Mammary epithelial cell (primary cell): ENCODE measurements at regions of chr1 and their contacts with region 1.

Region 1: DNA sequence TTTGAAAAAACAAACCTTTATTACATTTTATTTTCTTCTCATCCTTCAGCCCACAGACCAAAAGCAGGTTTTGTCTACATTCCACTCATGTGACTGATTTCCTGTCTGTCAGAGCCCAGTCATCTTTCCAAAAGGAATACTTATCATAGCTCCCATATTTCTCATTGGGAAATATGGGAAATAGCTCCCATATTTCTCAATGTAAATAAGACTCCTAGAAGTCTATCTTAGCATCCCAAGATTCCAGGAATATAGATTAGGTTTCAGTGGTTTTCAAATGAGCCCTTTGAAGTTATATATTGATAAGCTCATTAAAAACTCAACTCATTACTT is 19.1 kb upstream of the NRDC start:
- DNase-seq: peak; percentile 81
- H3K4me3 ChIP-seq: no peak overlapping the region
- H3K27ac ChIP-seq: peak overlapping the region; percentile 71
- H3K4me1 ChIP-seq: peaks cover 27% of the 10 kb centered on the region
- H3K27me3 ChIP-seq: no peaks in the 10 kb centered on the region
- CTCF ChIP-seq: no peak

Region 2: DNA sequence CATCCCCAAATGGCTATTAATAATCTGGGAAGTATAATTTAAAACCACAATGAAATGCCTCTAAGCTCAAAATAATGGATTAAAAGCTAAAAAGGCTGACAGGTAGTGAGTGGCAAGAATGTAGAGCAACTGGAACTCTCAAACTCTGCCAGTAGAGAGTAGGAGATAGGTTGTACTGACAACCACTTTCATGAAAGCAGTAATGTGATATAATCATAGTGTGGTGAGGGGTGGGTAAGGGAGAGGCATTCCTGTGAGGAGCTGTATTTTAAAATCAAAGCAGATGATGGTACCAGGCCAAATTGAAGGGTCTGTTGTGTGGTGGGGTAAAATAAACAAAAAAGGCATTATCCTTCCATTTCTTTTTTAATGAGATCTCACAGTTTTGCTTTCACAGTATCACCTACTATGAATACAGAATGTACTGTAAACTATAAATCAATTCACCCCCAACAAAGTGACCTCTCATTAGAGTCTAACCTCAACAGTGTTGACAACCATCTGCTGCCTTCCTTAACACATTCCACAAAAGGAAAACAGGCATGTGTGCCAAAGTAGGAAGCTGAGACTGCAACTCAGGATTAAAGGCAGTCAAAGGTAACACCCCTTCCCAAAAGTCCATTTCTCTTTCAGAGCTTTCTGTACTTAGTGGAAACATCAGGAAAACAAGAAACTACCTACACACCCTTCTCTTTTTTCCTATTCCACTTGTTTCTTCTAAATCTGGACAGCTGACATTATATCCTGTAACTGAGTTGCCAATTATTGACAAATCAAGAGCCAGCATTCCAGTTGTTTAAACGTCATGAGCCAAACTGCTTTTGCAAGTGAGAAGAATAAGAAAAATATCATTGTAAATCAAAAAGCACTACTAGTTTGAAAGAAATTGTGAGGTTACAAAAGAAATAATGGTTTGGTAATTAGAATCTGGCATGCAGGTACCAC is 1068.4 kb before region 1 on chr1:
- CTCF ChIA-PET with region 1: no interaction called
- dilution Hi-C with region 1: no loop called
- in situ Hi-C with region 1: no loop called
- intact Hi-C with region 1: no loop called
- DNase-seq: no peak
- H3K4me3 ChIP-seq: no peak overlapping the region
- H3K27ac ChIP-seq: no peak overlapping the region
- H3K4me1 ChIP-seq: no peaks in the 10 kb centered on the region
- H3K27me3 ChIP-seq: no peaks in the 10 kb centered on the region
- CTCF ChIP-seq: no peak

Region 3: DNA sequence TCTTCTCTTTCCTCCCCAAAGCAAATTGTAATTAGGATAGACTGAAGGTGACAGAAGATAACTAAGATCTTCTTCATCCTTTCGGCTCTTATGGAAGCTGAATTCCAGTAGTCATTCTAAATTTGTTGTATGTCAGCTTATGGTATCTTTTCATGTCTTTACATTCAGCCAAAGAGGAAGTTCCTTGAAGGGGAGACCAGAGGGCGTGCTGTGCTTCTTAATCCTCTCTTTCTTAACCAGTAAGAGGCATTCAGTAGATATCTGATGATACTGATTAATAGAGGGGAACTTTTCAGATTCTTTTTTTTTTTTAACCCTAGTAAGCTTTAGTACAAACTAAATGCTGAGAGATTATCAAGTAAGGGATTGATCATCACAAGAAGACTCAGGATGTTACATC is 178.5 kb before region 1 on chr1:
- CTCF ChIA-PET with region 1: no interaction called
- dilution Hi-C with region 1: no loop called
- in situ Hi-C with region 1: no loop called
- intact Hi-C with region 1: no loop called
- DNase-seq: no peak
- H3K4me3 ChIP-seq: no peak overlapping the region
- H3K27ac ChIP-seq: no peak overlapping the region
- H3K4me1 ChIP-seq: no peaks in the 10 kb centered on the region
- H3K27me3 ChIP-seq: no peaks in the 10 kb centered on the region
- CTCF ChIP-seq: no peak

Region 4: DNA sequence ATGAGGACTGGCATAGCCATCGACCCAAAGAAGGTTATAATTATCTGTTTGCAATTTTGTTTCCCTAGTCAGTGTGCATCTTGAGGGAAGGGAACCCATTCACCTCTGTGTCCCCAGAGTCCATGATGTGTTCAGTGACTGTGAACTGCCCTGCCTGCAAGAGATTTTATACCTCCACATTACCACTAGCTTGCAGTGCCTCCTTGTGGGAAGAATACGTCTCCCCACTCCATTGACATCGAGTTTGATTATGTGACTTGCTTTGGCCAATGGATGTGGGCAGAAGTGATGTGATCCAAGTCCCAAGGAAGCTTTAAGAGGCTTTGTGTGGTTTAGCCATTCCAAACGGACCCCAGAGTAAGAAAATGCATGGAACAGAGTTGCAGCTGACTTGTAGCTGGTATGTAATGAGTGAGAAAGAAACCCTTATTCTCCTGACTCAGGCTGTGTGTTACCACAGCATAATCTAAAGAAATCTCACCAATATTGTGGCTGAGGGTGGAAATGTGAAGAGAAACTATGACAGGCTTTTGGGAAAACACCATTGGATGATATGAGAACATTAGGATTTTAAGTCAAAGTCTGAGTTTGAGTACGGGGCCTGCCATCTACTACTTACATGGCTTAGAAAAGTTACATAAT is 28.6 kb after region 1 on chr1:
- CTCF ChIA-PET with region 1: interaction called, 10 read pairs
- dilution Hi-C with region 1: no loop called
- in situ Hi-C with region 1: no loop called
- intact Hi-C with region 1: loop called (anchors 1 kb)
- DNase-seq: peak; percentile 35
- H3K4me3 ChIP-seq: no peak overlapping the region
- H3K27ac ChIP-seq: no peak overlapping the region
- H3K4me1 ChIP-seq: peaks cover 8% of the 10 kb centered on the region
- H3K27me3 ChIP-seq: no peaks in the 10 kb centered on the region
- CTCF ChIP-seq: peak; percentile 49 to 54

Region 5: DNA sequence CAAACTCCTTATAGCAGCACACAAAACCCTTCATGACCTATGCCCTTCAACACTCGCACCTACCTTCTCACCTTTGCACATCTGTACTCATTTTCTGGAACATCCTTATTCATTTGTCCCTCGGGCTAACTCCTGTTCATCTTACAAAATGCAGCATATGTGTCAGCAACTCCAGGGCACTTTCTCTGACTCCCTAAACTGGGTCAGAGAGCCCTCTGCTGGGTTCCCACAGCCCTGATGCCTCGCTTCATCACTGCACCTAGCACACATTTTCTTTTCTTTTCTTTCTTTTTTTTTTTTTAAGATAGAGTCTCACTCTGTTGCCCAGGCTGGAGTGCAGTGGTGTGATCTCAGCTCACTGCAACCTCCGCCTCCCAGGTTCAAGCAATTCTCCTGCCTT is 38.9 kb after region 1 on chr1:
- CTCF ChIA-PET with region 1: no interaction called
- dilution Hi-C with region 1: no loop called
- in situ Hi-C with region 1: no loop called
- intact Hi-C with region 1: loop called (anchors 1 kb)
- DNase-seq: no peak
- H3K4me3 ChIP-seq: no peak overlapping the region
- H3K27ac ChIP-seq: no peak overlapping the region
- H3K4me1 ChIP-seq: no peaks in the 10 kb centered on the region
- H3K27me3 ChIP-seq: no peaks in the 10 kb centered on the region
- CTCF ChIP-seq: peak in 1 of 2 donors; percentile 33

Region 6: DNA sequence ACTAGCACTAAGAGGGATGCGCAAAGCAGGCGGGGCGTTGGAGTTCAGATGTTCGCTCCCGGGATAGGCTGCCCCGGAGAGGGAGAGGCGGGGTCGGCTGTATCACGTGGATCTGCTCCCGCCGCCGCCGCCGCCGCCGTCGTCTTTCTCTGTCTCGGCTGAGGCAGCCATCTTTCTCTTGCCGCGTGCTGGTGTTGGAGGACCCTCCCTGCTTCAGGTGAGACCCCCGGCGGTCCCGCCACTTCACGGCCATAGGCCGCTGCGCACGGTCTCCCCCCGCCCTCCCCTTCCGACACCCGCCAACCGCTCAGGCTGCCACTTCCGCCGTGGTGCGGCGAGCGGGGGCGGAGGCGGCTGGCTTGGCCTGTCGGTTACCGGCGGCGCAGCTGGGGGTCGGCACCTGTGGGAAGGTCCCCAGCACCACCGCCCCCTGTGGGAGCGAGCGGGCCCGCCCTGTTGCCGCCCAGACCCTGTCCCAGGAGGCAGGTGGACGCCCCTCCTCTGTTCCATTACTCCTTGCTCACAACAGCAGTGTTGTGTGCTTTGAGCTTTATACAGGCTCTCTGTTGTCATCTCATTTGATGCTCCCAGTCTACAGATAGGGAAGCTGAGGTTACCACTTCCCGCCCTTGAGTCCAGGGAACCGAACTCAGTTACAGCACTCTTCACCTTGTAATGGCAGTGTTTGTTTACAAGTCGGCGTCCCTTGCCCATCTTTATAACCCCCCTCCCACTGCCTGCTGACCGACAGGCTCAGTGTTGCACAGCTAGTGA is 158.7 kb after region 1 on chr1 and contains the start of gene BTF3L4:
- CTCF ChIA-PET with region 1: no interaction called
- dilution Hi-C with region 1: no loop called
- in situ Hi-C with region 1: no loop called
- intact Hi-C with region 1: loop called (anchors 1 kb)
- DNase-seq: peak; percentile 91
- H3K4me3 ChIP-seq: peak within 1 kb of the TSS; percentile 60 to 96 (median 71)
- H3K27ac ChIP-seq: peak within 1 kb of the TSS; percentile 77
- H3K4me1 ChIP-seq: peaks cover 29% of the 10 kb centered on the region
- H3K27me3 ChIP-seq: no peaks in the 10 kb centered on the region
- CTCF ChIP-seq: no peak
- total RNA-seq, gene BTF3L4: 53.7 to 63.2 TPM